Esophagus squamous epithelium (tissue), 5 donors: ENCODE measurements at regions of chr12 and their contacts with region 1.

Region 1: DNA sequence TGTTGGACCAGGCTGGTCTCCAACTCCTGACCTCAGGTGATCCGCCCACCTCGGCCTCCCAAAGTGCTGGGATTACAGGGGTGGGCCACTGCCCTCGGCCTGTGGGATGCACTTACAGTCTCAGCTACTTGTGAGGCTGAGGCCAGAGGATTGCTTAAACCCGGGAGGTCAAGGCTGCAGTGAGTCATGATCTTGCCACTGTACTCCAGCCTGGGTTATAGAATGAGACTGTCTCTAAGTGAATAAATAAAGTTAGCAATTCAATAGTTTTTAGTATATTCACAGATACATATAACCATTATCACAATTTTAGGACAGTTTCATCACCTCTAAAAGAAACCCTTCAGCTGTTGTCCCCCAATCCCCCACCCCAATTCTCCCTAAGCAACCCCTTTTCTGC is 61.1 kb downstream of the HCAR2 start:
- DNase-seq: no peak
- H3K4me3 ChIP-seq: no peak overlapping the region
- H3K27ac ChIP-seq: no peak overlapping the region
- H3K4me1 ChIP-seq: peaks cover 0 to 17% (median 0%) of the 10 kb centered on the region in 3 donors
- H3K27me3 ChIP-seq: no peaks in the 10 kb centered on the region
- CTCF ChIP-seq: no peak
- POLR2A ChIP-seq: no peak

Region 2: GRCh38 chr12:122752464-122753318 is 110.7 kb after region 1 on chr12 and contains the start of gene DENR:
- intact Hi-C with region 1: loop called (anchors 5 kb)
- DNase-seq: peak; percentile 83
- H3K4me3 ChIP-seq: peak within 1 kb of the TSS; percentile 71 to 99 (median 78)
- H3K27ac ChIP-seq: peak within 1 kb of the TSS; percentile 89 to 96 (median 91)
- H3K4me1 ChIP-seq: peaks cover 14 to 73% (median 15%) of the 10 kb centered on the region in 3 donors
- H3K27me3 ChIP-seq: no peaks in the 10 kb centered on the region
- CTCF ChIP-seq: peak; percentile 84 to 99 (median 94)
- POLR2A ChIP-seq: peak in 3 of 4 donors; percentile 10 to 79 (median 72)
- total RNA-seq, gene DENR: 23.3 to 40.1 (median 32.3) TPM